Dorsolateral prefrontal cortex (tissue), 120 donors: ENCODE measurements at regions of chr1 and their contacts with region 1.

Region 1: DNA sequence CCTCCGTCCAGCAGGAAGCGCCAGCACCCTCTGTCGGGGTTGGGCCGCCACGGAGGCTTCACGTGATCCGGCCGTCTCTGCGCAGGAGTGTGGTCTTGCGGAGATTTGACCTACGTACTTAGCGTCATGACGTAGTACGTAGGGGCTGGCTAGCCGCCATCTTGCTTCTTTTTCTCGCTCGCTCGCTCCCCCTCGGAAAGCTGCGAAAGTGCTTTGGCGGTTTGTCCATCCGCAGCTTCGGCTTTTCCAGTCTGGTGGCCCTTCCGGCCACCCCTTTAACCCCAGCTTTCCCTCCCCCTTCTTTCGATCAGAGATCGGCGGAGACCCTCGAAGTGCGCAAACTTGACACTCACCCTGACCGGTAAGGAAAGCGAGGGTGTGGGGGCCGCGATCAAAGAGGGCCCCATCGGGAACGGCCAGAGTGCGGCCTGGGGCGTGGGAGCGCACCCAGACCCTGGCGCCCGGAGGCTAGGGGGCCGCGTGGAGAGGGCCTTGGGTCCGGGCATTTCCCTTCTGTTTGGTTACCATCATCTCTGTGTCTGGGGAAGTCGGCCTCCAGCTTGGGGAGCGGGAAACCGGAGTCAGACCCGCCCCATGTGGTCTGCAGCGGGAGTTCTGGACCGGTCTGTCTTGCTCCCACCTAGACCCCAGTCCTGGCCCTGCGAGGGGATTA is at the start of gene PRRC2C:
- DNase-seq: peak; percentile 95 to 98 (median 97)
- H3K4me3 ChIP-seq: peak within 1 kb of the TSS; percentile 45 to 100 (median 94)
- H3K27ac ChIP-seq: peak within 1 kb of the TSS; percentile 81 to 100 (median 97)
- H3K27me3 ChIP-seq: no peaks in the 10 kb centered on the region
- CTCF ChIP-seq: peak; percentile 82 to 99 (median 92)
- total RNA-seq, gene PRRC2C: 127 to 198 (median 149) TPM

Region 2: GRCh38 chr1:171313835-171314320 is 171.6 kb before region 1 on chr1 and contains the start of gene FMO4:
- intact Hi-C with region 1: loop called in 1 of 2 experiments (anchors 2 kb)
- DNase-seq: peak; percentile 5 to 84 (median 66)
- H3K4me3 ChIP-seq: peak within 1 kb of the TSS in 58 of 59 donors; percentile 1 to 66 (median 43)
- H3K27ac ChIP-seq: peak within 1 kb of the TSS in 49 of 59 donors; percentile 5 to 81 (median 49)
- H3K27me3 ChIP-seq: no peaks in the 10 kb centered on the region
- CTCF ChIP-seq: peak; percentile 74 to 98 (median 88)
- total RNA-seq, gene FMO4: 0.35 to 5.3 (median 2.0) TPM

Region 3: GRCh38 chr1:171427852-171428471 is 57.5 kb before region 1 on chr1:
- intact Hi-C with region 1: loop called in 1 of 2 experiments (anchors 5 kb)
- DNase-seq: no peak
- H3K4me3 ChIP-seq: peak overlapping the region in 20 of 59 donors; percentile 0 to 43 (median 12)
- H3K27ac ChIP-seq: peak overlapping the region in 58 of 59 donors; percentile 36 to 95 (median 84)
- H3K27me3 ChIP-seq: no peaks in the 10 kb centered on the region
- CTCF ChIP-seq: peak in 3 of 56 donors; percentile 4 to 22 (median 7)

Region 4: GRCh38 chr1:171781176-171781875 is 295.8 kb after region 1 on chr1 and contains the start of gene METTL13:
- intact Hi-C with region 1: loop called in 1 of 2 experiments (anchors 10 kb)
- DNase-seq: peak; percentile 96 to 99 (median 99)
- H3K4me3 ChIP-seq: peak within 1 kb of the TSS; percentile 43 to 94 (median 82)
- H3K27ac ChIP-seq: peak within 1 kb of the TSS in 58 of 59 donors; percentile 6 to 97 (median 90)
- H3K27me3 ChIP-seq: no peaks in the 10 kb centered on the region
- CTCF ChIP-seq: peak in 41 of 56 donors; percentile 7 to 63 (median 31)
- total RNA-seq, gene METTL13: 17.7 to 35.2 (median 25.0) TPM

Region 5: GRCh38 chr1:172532700-172533509 is 1047.4 kb after region 1 on chr1 and contains the start of gene SUCO:
- intact Hi-C with region 1: loop called in 1 of 2 experiments (anchors 10 kb)
- DNase-seq: peak; percentile 99 to 100 (median 99)
- H3K4me3 ChIP-seq: peak within 1 kb of the TSS; percentile 67 to 99 (median 93)
- H3K27ac ChIP-seq: peak within 1 kb of the TSS; percentile 93 to 100 (median 98)
- H3K27me3 ChIP-seq: no peaks in the 10 kb centered on the region
- CTCF ChIP-seq: peak in 32 of 56 donors; percentile 0 to 52 (median 22)
- total RNA-seq, gene SUCO: 24.2 to 46.6 (median 34.6) TPM